Aorta (tissue), 5 donors: ENCODE measurements at regions of chr7 and their contacts with region 1.

Region 1: DNA sequence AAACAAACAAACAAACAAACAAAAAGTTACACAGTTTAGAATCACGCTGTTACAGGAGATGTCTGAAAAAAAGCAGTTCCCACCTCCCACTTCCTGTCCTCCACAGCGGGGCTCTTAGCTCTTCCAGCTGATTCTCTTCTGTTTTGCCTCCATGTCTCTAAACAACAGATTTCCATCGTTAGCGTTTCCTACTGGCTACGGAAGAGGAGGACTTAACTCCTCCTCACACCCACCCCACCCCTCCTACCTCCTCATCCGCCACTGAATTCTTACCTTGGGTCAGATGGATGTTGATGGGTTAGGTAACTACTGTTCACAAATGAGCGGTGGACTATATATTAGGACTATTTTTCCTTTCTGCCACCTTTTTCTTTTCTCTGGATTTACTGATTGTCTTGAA is 36.8 kb upstream of the NUB1 start:
- DNase-seq: no peak
- ATAC-seq: no peak
- H3K4me3 ChIP-seq: no peak overlapping the region
- H3K27ac ChIP-seq: no peak overlapping the region
- H3K4me1 ChIP-seq: no peaks in the 10 kb centered on the region
- H3K27me3 ChIP-seq: no peaks in the 10 kb centered on the region

Region 2: GRCh38 chr7:151123822-151124464 is 180.9 kb before region 1 on chr7:
- intact Hi-C with region 1: loop called (anchors 2 to 5 kb)
- DNase-seq: peak; percentile 86 to 93
- ATAC-seq: peak; percentile 87
- H3K4me3 ChIP-seq: no peak overlapping the region
- H3K27ac ChIP-seq: no peak overlapping the region
- H3K4me1 ChIP-seq: no peaks in the 10 kb centered on the region
- H3K27me3 ChIP-seq: no peaks in the 10 kb centered on the region

Region 3: DNA sequence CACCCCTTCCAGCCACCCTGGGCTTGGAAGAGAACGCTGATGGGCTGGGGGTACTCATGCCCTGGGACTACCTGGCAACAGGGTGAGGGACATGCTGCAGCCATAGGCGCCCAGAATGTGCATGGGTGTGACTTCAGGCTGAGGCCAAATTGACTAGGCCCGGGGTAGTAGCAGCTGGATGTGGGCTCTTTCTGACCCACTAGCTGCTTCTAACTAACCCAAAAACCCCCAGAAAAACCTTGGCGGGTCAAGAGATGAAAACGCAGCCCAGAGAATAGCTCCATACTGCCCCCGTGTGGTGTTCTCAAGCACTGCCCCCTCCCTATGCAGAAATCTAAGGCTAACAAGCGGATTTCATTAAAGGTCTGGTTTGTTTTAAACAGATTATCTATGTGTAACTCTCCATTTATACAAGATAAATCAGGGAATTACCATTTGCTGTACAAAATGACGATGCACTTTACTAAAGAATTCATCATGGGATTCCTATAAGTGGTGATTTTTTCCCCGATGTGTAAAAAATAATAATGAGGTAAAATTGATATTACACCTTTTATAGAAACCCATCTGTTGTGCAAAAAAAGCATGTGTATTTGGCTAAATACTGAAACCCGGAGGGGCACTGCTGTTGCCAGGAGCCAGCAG is 60.5 kb before region 1 on chr7:
- intact Hi-C with region 1: loop called (anchors 1 to 2 kb)
- DNase-seq: peak in 1 of 2 donors; percentile 79
- ATAC-seq: no peak
- H3K4me3 ChIP-seq: no peak overlapping the region
- H3K27ac ChIP-seq: no peak overlapping the region
- H3K4me1 ChIP-seq: no peaks in the 10 kb centered on the region
- H3K27me3 ChIP-seq: no peaks in the 10 kb centered on the region

Region 4: DNA sequence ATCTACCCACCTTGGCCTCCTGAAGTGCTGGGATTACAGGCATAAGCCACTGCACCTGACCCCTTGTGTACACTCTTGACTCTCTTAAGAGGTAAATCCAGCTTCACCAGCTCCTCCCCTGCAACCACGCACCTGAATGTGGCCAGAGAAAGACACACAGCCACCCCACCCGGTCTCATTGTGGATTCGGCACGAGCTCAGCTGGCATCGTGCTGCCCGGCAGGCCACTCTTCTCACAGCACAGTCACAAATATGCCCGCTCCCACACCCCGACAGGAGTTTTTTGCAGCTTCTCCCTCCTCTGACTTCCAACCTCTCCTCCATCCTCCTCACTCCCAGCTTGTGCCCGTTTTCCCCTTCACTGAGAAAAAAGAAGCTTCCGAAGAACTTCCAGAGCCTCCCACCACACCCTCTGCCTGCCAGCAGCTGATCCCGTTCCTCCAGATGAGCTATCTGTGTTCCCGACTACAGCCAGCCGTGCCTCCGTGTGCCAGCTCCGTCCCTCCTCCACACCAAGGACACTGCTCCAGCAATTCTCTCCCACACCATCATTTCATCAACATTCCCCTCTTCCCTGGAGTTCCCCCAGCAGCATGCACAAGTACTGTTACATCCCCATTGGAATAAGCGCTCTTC is 48.3 kb before region 1 on chr7:
- intact Hi-C with region 1: no loop called
- DNase-seq: no peak
- ATAC-seq: no peak
- H3K4me3 ChIP-seq: no peak overlapping the region
- H3K27ac ChIP-seq: no peak overlapping the region
- H3K4me1 ChIP-seq: no peaks in the 10 kb centered on the region
- H3K27me3 ChIP-seq: no peaks in the 10 kb centered on the region

Region 5: DNA sequence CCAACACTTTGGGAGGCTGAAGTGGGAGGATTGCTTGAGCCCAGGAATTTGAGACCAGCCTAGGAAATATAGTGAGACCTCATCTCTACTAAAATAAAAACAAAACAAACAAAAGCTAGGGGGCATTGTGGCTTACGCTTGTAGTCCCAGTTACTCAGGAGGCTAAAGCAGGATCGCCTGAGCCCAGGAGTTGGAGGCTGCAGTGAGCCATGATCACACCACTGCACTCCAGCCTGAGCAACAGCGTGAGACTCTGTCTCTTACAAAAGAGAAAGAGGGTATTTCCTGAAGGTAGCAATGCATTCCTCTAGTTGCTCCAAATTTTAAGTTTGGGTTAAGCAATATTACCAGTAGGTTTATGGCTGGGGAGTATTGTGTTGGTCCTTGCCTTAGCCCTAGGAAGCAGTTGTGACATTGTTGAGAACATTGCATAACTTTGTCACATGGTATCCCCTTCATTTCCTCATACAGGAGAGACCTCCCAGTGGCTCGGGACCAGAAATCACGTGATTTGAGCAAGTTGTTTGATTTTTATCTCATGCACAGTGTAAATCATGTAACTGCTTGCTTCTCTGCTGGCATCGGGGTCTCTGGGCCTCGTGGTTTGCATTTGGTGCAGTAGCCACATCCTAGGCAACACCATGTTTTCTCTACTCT is 33.0 kb before region 1 on chr7:
- intact Hi-C with region 1: no loop called
- DNase-seq: peak; percentile 59 to 76
- ATAC-seq: peak; percentile 84
- H3K4me3 ChIP-seq: no peak overlapping the region
- H3K27ac ChIP-seq: no peak overlapping the region
- H3K4me1 ChIP-seq: no peaks in the 10 kb centered on the region
- H3K27me3 ChIP-seq: no peaks in the 10 kb centered on the region

Region 6: DNA sequence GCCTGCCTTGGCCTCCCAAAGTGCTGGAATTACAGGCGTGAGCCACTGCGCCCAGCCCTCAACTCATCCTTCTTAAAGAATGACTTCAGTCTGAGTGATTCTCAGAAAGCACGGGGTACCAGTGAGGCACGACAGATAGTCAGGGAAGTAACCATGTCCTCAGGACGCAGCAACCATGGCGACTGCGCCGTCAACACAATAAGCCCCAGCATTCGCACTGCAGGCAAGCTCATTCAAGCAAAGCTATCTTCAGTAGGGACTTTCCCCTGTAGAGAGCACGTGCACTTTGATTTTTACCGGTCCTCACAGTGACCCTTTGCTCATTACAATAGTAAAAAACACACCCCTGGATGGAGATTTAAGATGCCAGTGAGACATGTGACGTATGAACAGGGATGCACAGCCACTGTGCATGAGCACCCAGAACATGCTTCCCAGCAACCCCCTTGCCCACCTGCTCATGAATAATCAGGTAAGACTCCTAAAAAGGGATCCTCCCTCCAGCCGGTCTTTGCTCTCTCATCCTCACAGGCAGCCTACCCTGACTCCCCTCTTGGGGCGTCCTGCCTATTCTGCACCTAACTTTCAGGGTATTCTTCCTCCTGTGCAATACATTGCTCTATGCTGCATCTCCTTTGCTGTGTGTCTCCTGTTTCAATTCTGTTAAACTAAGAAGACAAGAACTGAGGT is 95.9 kb after region 1 on chr7:
- intact Hi-C with region 1: no loop called
- DNase-seq: no peak
- ATAC-seq: no peak
- H3K4me3 ChIP-seq: no peak overlapping the region
- H3K27ac ChIP-seq: no peak overlapping the region
- H3K4me1 ChIP-seq: no peaks in the 10 kb centered on the region
- H3K27me3 ChIP-seq: no peaks in the 10 kb centered on the region